ENCODE measurements at regions of chr6 and their contacts with region 1.

Region 1: GRCh38 chr6:37547564-37548061 is 47.9 kb upstream of the CCDC167 start:
- DNase-seq: no peak
- ATAC-seq: peak; percentile 38
- H3K4me3 ChIP-seq: no peak overlapping the region
- H3K27ac ChIP-seq: peak overlapping the region; percentile 83
- H3K4me1 ChIP-seq: peaks cover 64% of the 10 kb centered on the region
- H3K27me3 ChIP-seq: no peaks in the 10 kb centered on the region
- CTCF ChIP-seq: no peak
- EP300 ChIP-seq: no peak
- POLR2A ChIP-seq: no peak
- RAD21 ChIP-seq: no peak

Region 2: GRCh38 chr6:37155394-37156312 is 392.0 kb before region 1 on chr6:
- CTCF ChIA-PET with region 1: no interaction called
- POLR2A ChIA-PET with region 1: no interaction called
- RAD21 ChIA-PET with region 1: no interaction called
- SMC1A ChIA-PET with region 1: interaction called, 4 read pairs
- in situ Hi-C with region 1: no loop called
- intact Hi-C with region 1: loop called (anchors 10 kb)
- DNase-seq: peak; percentile 97
- ATAC-seq: peak; percentile 91
- H3K4me3 ChIP-seq: no peak overlapping the region; the same call in 1 of the 2 replicates
- H3K27ac ChIP-seq: peak overlapping the region; percentile 83
- H3K4me1 ChIP-seq: peaks cover 55% of the 10 kb centered on the region
- H3K27me3 ChIP-seq: no peaks in the 10 kb centered on the region
- CTCF ChIP-seq: no peak
- EP300 ChIP-seq: peak; percentile 89 to 92
- POLR2A ChIP-seq: peak; percentile 60
- RAD21 ChIP-seq: no peak

Region 3: GRCh38 chr6:37559501-37559900 is 11.9 kb after region 1 on chr6:
- CTCF ChIA-PET with region 1: interaction called, 235 read pairs
- POLR2A ChIA-PET with region 1: interaction called, 114 read pairs
- RAD21 ChIA-PET with region 1: interaction called, 266 read pairs
- SMC1A ChIA-PET with region 1: interaction called, 232 read pairs
- in situ Hi-C with region 1: no loop called
- intact Hi-C with region 1: no loop called
- DNase-seq: no peak
- ATAC-seq: no peak
- H3K4me3 ChIP-seq: peak overlapping the region; percentile 11; the same call in 1 of the 2 replicates
- H3K27ac ChIP-seq: peak overlapping the region; percentile 91
- H3K4me1 ChIP-seq: peaks cover 88% of the 10 kb centered on the region
- H3K27me3 ChIP-seq: no peaks in the 10 kb centered on the region
- CTCF ChIP-seq: no peak
- EP300 ChIP-seq: no peak
- POLR2A ChIP-seq: no peak
- RAD21 ChIP-seq: no peak

Region 4: DNA sequence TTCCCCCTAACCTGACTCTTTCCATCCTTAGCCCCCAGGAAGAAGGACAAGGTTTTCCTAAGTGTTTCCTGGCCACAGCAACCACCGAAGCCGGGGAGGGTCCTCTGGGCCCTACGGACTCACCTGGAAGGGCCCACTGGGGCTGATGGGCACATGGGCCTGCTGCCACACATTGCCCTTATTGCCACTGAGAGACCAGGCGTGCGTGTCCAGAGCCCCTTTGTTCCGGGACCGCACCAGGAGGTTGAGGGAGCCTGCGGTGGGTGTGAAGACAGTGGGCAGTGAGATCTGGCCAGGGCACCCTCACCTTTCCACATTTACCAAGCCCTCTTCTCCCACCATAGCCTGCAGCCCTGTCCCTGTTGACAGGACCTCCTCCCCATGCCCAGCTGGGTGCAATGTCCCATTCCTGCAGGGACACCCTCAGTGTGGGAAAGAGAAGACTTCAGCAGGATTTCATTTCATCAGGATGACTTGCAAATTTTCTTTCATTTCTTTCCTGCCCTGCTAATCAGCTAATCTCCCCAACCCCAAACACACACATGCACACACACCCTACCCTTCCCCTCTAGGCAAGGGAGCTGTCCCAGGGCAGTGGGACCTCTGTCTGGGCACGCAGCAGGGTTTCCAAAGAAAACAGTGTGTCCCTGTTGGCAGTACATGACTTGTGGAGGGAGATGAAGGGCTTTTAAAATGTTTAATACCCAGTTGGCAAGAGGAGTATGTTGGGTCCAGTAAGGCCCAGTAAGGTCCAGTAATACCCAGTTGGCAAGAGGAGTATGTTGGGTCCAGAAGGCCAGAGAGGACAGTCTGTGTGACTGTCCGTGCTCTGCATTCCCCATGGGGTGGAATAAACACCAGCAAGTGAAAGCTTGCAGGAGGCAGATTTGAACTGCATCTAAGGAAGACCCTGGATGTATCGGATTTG is 91.1 kb after region 1 on chr6:
- CTCF ChIA-PET with region 1: no interaction called
- POLR2A ChIA-PET with region 1: no interaction called
- RAD21 ChIA-PET with region 1: no interaction called
- SMC1A ChIA-PET with region 1: no interaction called
- in situ Hi-C with region 1: no loop called
- intact Hi-C with region 1: no loop called
- DNase-seq: no peak
- ATAC-seq: no peak
- H3K4me3 ChIP-seq: no peak overlapping the region
- H3K27ac ChIP-seq: no peak overlapping the region
- H3K4me1 ChIP-seq: no peaks in the 10 kb centered on the region
- H3K27me3 ChIP-seq: no peaks in the 10 kb centered on the region; a peak in 1 of 4 replicates
- CTCF ChIP-seq: no peak
- EP300 ChIP-seq: no peak
- POLR2A ChIP-seq: no peak
- RAD21 ChIP-seq: no peak